GM13977 (cell line): ENCODE measurements at regions of chr4 and their contacts with region 1.

Region 1: DNA sequence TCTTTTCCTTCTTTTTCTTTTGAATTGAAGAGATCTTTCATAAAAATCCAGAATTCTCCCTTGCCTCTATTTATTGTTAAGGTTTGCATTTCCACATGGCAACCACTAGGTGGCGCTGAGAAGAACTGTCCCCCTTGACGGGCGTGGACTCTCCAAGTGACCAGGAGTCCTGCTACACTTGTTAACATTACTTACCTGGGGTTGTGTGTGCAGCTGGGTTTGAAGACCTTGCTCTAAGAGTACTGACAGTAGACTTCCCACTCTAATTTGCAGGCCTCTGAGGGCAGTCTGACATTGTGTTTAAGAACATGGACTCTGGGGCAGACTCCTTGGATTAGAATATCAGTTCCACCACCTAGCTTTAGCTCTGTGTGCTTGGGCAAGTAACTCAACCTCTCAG is 52.8 kb downstream of the GPRIN3 start:
- DNase-seq: peak; percentile 41
- CTCF ChIP-seq: peak; percentile 84

Region 2: GRCh38 chr4:89434364-89434988 is 179.6 kb after region 1 on chr4:
- in situ Hi-C with region 1: loop called (anchors 25 kb)
- DNase-seq: peak; percentile 35
- CTCF ChIP-seq: peak; percentile 71

Region 3: DNA sequence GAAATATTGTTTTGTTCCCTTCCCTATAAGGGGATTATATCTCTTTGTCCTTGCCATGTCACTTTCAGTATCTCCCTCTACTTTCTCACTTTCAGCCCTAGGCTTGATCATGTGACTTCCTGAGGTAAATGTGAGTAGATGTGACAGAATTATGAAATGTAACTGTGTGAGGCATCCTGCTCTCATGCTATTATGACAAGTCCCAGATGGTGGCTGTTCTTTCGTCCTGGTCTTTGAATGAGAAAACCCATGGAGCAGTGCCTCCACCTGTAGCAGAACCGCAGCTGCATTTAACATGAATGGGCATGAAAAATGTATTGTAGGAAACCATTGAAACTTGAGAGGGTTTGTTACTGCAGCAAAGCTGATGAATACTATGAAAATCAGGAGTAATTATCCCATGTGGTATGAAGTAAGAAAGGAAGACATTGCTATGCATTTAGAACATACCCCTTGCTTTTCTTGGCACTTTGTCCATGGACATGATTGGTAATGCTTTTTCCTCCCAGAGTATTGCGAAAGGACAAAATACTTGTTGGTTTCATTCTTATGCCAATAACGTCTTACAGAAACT is 254.9 kb after region 1 on chr4:
- in situ Hi-C with region 1: no loop called
- DNase-seq: peak; percentile 34
- CTCF ChIP-seq: no peak

Region 4: GRCh38 chr4:89745708-89746107 is 490.9 kb after region 1 on chr4:
- in situ Hi-C with region 1: no loop called
- DNase-seq: no peak
- CTCF ChIP-seq: no peak